ENCODE measurements at regions of chr7 and their contacts with region 1.

Region 1: GRCh38 chr7:90424720-90425119 is 21.5 kb downstream of the CLDN12 start:
- DNase-seq: no peak
- H3K4me3 Mint-ChIP-seq: no peak overlapping the region
- H3K27ac Mint-ChIP-seq: peak overlapping the region; percentile 60
- H3K4me1 Mint-ChIP-seq: peaks cover 20% of the 10 kb centered on the region
- H3K27me3 Mint-ChIP-seq: no peaks in the 10 kb centered on the region

Region 2: GRCh38 chr7:89857767-89858166 is 567.0 kb before region 1 on chr7:
- CTCF ChIA-PET with region 1: no interaction called
- POLR2A ChIA-PET with region 1: no interaction called
- DNase-seq: no peak
- H3K4me3 Mint-ChIP-seq: no peak overlapping the region
- H3K27ac Mint-ChIP-seq: no peak overlapping the region
- H3K4me1 Mint-ChIP-seq: no peaks in the 10 kb centered on the region
- H3K27me3 Mint-ChIP-seq: peaks cover 2% of the 10 kb centered on the region

Region 3: GRCh38 chr7:90155206-90155605 is 269.5 kb before region 1 on chr7:
- CTCF ChIA-PET with region 1: interaction called, 71 read pairs
- POLR2A ChIA-PET with region 1: no interaction called
- DNase-seq: no peak
- H3K4me3 Mint-ChIP-seq: no peak overlapping the region
- H3K27ac Mint-ChIP-seq: no peak overlapping the region
- H3K4me1 Mint-ChIP-seq: peaks cover 5% of the 10 kb centered on the region
- H3K27me3 Mint-ChIP-seq: peaks cover 27% of the 10 kb centered on the region

Region 4: DNA sequence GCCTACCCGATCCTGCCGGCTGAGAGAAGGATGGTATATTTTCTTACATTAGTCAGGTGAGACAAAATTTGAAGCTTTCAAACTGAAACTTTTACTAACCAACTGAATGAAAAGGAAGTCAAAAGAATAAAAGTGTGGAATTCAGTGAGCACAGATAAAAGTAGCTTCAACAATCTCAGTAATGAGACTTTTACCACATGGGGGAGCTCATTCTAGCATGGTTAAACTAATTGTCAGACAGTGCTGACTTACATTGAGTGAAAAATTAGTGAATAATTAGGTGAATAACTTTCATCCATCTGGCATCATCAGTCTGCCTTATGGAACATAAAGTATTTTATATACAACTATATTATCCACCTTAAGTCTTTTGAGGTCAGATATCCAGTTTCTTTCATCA is 112.0 kb before region 1 on chr7:
- CTCF ChIA-PET with region 1: interaction called, 15 read pairs
- POLR2A ChIA-PET with region 1: interaction called, 3 read pairs
- DNase-seq: no peak
- H3K4me3 Mint-ChIP-seq: no peak overlapping the region
- H3K27ac Mint-ChIP-seq: no peak overlapping the region
- H3K4me1 Mint-ChIP-seq: no peaks in the 10 kb centered on the region
- H3K27me3 Mint-ChIP-seq: peaks cover 16% of the 10 kb centered on the region

Region 5: GRCh38 chr7:90346336-90347125 is 78.2 kb before region 1 on chr7 and contains the start of gene GTPBP10:
- CTCF ChIA-PET with region 1: interaction called, 15 read pairs
- POLR2A ChIA-PET with region 1: interaction called, 3 read pairs
- DNase-seq: peak; percentile 94
- H3K4me3 Mint-ChIP-seq: peak within 1 kb of the TSS; percentile 91
- H3K27ac Mint-ChIP-seq: peak within 1 kb of the TSS; percentile 93
- H3K4me1 Mint-ChIP-seq: peaks cover 31% of the 10 kb centered on the region
- H3K27me3 Mint-ChIP-seq: no peaks in the 10 kb centered on the region
- total RNA-seq, gene GTPBP10: 26.6 to 28.3 TPM